Activated CD4-positive, alpha-beta memory T cell treated with anti-CD3 and anti-CD28 coated beads, Interleukin-2, amount 10 ng/mL, durations not matched to agents 7 days and 5 days (primary cell): ENCODE measurements at regions of chr19 and their contacts with region 1.

Region 1: DNA sequence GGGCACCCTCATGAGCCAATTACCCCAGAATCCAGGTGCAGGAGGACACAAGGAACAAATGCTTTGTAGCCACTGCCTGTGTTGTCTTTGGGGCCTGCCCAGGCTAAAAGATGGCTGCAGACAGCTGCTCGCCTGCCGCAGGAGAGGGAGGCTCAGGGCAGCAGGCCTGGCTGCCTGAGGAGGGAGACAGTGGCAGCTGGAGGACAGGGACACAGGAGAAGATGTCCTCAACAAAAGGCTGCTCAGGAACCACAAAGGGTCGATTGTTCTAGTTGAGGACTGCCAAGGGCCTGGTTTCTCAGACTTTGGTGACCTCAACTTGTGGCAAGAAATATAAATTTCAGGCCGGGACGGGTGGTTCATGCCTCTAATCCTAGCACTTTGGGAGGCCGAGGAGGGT is 7.6 kb downstream of the SIRT2 start:
- DNase-seq: no peak
- H3K4me3 Mint-ChIP-seq: no peak overlapping the region
- H3K27ac Mint-ChIP-seq: no peak overlapping the region
- H3K4me1 Mint-ChIP-seq: peaks cover 3% of the 10 kb centered on the region
- H3K27me3 Mint-ChIP-seq: no peaks in the 10 kb centered on the region

Region 2: GRCh38 chr19:38693380-38694223 is 198.2 kb before region 1 on chr19:
- CTCF ChIA-PET with region 1: no interaction called
- POLR2A ChIA-PET with region 1: no interaction called
- DNase-seq: peak; percentile 74
- H3K4me3 Mint-ChIP-seq: peak overlapping the region; percentile 23
- H3K27ac Mint-ChIP-seq: peak overlapping the region; percentile 91
- H3K4me1 Mint-ChIP-seq: peaks cover 97% of the 10 kb centered on the region
- H3K27me3 Mint-ChIP-seq: no peaks in the 10 kb centered on the region

Region 3: GRCh38 chr19:38729653-38730469 is 161.9 kb before region 1 on chr19:
- CTCF ChIA-PET with region 1: no interaction called
- POLR2A ChIA-PET with region 1: no interaction called
- DNase-seq: peak; percentile 81
- H3K4me3 Mint-ChIP-seq: no peak overlapping the region
- H3K27ac Mint-ChIP-seq: peak overlapping the region; percentile 61
- H3K4me1 Mint-ChIP-seq: peaks cover 44% of the 10 kb centered on the region
- H3K27me3 Mint-ChIP-seq: no peaks in the 10 kb centered on the region

Region 4: GRCh38 chr19:38831142-38831605 is 60.6 kb before region 1 on chr19:
- CTCF ChIA-PET with region 1: interaction called, 10 read pairs
- POLR2A ChIA-PET with region 1: interaction called, 6 read pairs
- DNase-seq: no peak
- H3K4me3 Mint-ChIP-seq: peak overlapping the region; percentile 85
- H3K27ac Mint-ChIP-seq: peak overlapping the region; percentile 80
- H3K4me1 Mint-ChIP-seq: peaks cover 34% of the 10 kb centered on the region
- H3K27me3 Mint-ChIP-seq: no peaks in the 10 kb centered on the region

Region 5: DNA sequence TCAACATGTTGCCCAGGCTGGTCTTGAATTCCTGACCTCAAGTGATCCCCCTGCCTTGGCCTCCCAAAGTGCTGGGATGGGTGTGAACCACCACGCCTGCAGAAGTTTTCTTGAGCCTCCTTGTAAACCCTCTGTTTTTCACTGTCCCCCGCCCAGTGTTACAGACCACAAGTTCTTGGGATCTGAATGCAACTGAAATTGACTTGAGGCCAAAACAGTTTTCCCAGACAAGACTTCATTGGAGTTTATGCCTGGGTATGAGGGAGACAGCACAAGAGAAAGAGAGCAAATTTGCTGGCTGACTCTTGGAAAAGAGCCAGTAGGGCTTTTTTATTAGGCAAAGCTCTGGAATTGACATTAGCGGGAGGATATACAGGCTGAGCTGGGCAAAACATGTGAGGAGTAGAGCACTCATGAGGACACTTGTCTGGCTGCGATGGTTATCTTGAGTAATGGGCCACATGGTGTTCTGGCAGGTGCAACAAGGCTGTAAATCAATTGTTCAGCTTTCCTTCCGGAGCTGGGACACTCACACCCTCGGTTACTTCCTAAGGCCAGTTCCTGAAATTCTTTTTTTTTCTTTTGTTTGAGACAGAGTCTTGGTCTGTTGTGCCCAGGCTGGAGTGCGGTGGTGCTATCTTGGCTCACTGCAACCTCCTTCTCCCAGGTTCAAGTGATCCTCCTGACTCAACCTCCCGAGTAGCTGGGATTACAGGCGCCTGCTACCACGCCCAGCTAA is 29.3 kb before region 1 on chr19:
- CTCF ChIA-PET with region 1: interaction called, 10 read pairs
- POLR2A ChIA-PET with region 1: no interaction called
- DNase-seq: no peak
- H3K4me3 Mint-ChIP-seq: no peak overlapping the region
- H3K27ac Mint-ChIP-seq: no peak overlapping the region
- H3K4me1 Mint-ChIP-seq: peaks cover 52% of the 10 kb centered on the region
- H3K27me3 Mint-ChIP-seq: no peaks in the 10 kb centered on the region

Region 6: GRCh38 chr19:39001041-39001440 is 109.3 kb after region 1 on chr19:
- CTCF ChIA-PET with region 1: no interaction called
- POLR2A ChIA-PET with region 1: no interaction called
- DNase-seq: no peak
- H3K4me3 Mint-ChIP-seq: no peak overlapping the region
- H3K27ac Mint-ChIP-seq: no peak overlapping the region
- H3K4me1 Mint-ChIP-seq: peaks cover 5% of the 10 kb centered on the region
- H3K27me3 Mint-ChIP-seq: peaks cover 11% of the 10 kb centered on the region

Region 7: DNA sequence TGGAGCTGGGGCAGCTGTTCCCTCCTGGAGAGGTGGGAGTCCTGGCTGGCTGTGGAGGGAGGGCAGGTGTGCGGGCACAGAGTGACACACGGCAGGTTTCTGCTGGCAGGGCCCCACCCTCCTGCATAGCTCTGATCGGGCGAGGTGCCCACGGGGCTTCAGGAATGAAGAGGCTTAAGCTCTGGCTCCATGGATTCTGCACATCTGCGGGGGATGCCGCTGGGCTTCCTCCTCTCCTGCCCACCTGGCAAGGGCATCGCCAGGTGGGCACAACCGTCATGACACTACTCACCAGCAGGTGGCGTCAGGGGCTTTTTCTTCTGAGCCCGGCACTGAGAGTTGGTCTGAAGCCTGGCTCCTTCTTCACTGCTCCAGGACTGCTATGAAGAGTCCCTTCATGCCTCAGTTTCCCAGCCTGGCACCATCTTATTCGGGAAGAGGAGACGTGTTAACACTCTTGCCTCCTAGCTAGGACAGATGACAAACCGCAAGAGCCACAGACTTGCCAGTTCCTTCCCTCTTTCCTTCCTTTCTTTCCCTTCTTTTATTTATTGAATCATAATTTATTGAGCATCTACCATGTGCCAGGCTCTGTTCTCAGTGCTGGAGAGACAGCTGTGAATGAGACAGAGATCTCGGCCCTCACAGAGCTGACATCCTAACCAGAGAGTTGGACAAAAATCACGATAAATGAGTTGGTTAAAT is 218.6 kb after region 1 on chr19:
- CTCF ChIA-PET with region 1: no interaction called
- POLR2A ChIA-PET with region 1: no interaction called
- DNase-seq: peak; percentile 76
- H3K4me3 Mint-ChIP-seq: no peak overlapping the region
- H3K27ac Mint-ChIP-seq: no peak overlapping the region
- H3K4me1 Mint-ChIP-seq: peaks cover 3% of the 10 kb centered on the region
- H3K27me3 Mint-ChIP-seq: peaks cover 3% of the 10 kb centered on the region